OCI-LY7 (cell line): ENCODE measurements at regions of chr4 and their contacts with region 1.

Region 1: DNA sequence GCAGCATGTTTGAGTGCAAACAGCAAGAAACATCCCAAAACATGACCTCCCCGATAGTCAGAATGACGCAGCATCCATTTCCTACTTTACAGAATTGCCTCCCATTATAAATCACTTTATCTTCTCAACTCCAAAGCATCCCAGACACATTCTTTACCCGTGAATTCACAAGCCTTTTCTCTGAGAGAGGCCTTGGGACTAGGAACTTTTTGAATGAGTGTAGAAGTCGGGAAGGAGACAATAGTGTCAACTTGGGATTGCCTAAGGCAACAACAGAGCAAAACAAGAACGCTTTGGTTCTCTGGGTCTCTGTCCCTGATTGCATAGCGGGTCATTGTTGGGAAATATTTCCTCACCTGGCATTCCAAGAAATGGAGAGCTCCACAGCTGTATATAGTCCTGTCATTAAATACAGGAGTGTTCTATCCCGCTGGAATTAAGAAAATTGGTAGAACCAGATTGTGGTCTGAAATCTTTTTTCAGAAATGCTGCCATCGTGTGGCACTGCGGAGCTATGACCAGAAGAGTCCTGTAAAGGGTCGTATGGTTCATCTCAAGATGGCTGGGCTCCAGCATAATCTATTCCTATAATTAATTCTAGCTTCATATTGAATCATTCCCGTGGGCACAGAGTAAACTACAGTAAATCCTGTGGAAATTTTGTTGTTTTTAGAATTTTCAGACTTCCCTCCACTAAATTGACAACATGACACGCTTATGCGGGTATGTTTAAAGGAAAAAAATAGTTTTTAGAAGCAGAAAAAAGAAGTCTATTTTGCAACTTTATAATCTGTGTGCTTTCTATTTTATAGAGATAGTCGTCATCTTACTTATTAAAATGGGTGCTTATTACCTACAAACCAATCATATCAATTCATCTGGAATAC is 2.0 kb upstream of the SPP1 start:
- DNase-seq: peak; percentile 60
- H3K4me3 ChIP-seq: no peak overlapping the region
- H3K27ac ChIP-seq: no peak overlapping the region
- H3K4me1 ChIP-seq: peaks cover 9% of the 10 kb centered on the region
- CTCF ChIP-seq: peak; percentile 90

Region 2: GRCh38 chr4:87150498-87151261 is 822.8 kb before region 1 on chr4:
- CTCF ChIA-PET with region 1: no interaction called
- POLR2A ChIA-PET with region 1: no interaction called
- intact Hi-C with region 1: no loop called
- DNase-seq: peak; percentile 77
- H3K4me3 ChIP-seq: no peak overlapping the region
- H3K27ac ChIP-seq: no peak overlapping the region
- H3K4me1 ChIP-seq: no peaks in the 10 kb centered on the region
- CTCF ChIP-seq: peak; percentile 98

Region 3: GRCh38 chr4:87853108-87853507 is 120.4 kb before region 1 on chr4:
- CTCF ChIA-PET with region 1: interaction called, 4 read pairs
- POLR2A ChIA-PET with region 1: interaction called, 4 read pairs
- intact Hi-C with region 1: loop called (anchors 2 kb)
- DNase-seq: peak; percentile 33
- H3K4me3 ChIP-seq: no peak overlapping the region
- H3K27ac ChIP-seq: no peak overlapping the region
- H3K4me1 ChIP-seq: no peaks in the 10 kb centered on the region
- CTCF ChIP-seq: peak; percentile 81